GM12878 (cell line): ENCODE measurements at regions of chr2 and their contacts with region 1.

Region 1: DNA sequence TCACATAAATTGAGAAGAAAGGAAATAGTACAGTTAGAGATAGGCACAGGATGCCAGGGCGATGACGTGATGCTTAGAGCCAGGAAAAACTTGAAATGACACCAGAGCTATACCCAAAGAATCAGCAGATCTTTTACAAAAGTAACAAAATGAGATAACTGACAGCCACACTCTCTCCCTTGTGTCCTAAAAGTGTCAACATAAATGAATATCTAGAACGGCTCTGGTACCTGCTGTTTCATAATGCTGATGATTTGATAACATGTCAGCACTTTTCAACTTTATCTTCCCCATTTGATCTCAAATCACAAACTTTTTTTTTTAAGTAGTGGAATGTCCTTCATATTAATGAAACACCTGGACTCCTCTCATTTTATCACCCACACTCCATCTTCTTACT is 45.5 kb upstream of the ZC3H15 start:
- DNase-seq: no peak
- ATAC-seq: no peak
- H3K4me3 ChIP-seq: no peak overlapping the region
- H3K27ac ChIP-seq: no peak overlapping the region
- H3K4me1 ChIP-seq: no peaks in the 10 kb centered on the region
- H3K27me3 ChIP-seq: no peaks in the 10 kb centered on the region
- CTCF ChIP-seq: no peak
- EP300 ChIP-seq: no peak
- POLR2A ChIP-seq: no peak
- RAD21 ChIP-seq: no peak

Region 2: GRCh38 chr2:185796758-185797157 is 643.8 kb before region 1 on chr2:
- CTCF ChIA-PET with region 1: no interaction called
- POLR2A ChIA-PET with region 1: no interaction called
- RAD21 ChIA-PET with region 1: no interaction called
- SMC1A ChIA-PET with region 1: no interaction called
- in situ Hi-C with region 1: no loop called
- intact Hi-C with region 1: loop called (anchors 10 kb)
- DNase-seq: no peak
- ATAC-seq: peak; percentile 73
- H3K4me3 ChIP-seq: no peak overlapping the region
- H3K27ac ChIP-seq: no peak overlapping the region
- H3K4me1 ChIP-seq: no peaks in the 10 kb centered on the region
- H3K27me3 ChIP-seq: no peaks in the 10 kb centered on the region
- CTCF ChIP-seq: no peak
- EP300 ChIP-seq: no peak
- POLR2A ChIP-seq: no peak
- RAD21 ChIP-seq: no peak